ENCODE measurements at regions of chr16 and their contacts with region 1.

Region 1: GRCh38 chr16:67660564-67661028 is at the start of gene PARD6A:
- DNase-seq: peak; percentile 94
- H3K4me3 Mint-ChIP-seq: peak within 1 kb of the TSS; percentile 86
- H3K27ac Mint-ChIP-seq: peak within 1 kb of the TSS; percentile 97
- H3K4me1 Mint-ChIP-seq: peaks cover 6% of the 10 kb centered on the region
- H3K27me3 Mint-ChIP-seq: no peaks in the 10 kb centered on the region
- CTCF ChIP-seq: no peak
- total RNA-seq, gene PARD6A: 3.2 and 4.5 TPM in 2 replicates

Region 2: DNA sequence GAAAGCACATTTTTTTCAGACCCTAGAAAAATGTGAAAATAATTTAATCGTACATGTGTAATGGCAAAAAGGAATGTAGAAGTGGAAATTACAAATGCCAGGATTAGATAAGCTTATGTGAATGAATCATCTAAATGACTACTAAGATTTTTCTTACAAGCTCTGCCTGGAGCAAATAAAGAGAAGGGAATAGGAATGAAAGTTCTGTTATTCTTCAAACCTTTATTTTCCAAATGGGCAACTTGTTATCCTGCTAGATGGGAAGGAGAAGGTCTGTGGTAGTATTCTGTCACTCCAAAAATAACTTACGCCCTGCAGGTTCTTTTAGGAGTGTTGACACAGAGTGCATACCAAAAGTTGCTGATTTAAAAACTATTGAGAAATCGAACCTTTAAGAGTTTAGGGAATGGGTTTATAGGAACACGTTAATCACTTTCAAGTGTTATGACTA is 88.6 kb before region 1 on chr16:
- CTCF ChIA-PET with region 1: no interaction called
- POLR2A ChIA-PET with region 1: interaction called, 11 read pairs
- intact Hi-C with region 1: no loop called
- DNase-seq: peak; percentile 12
- H3K4me3 Mint-ChIP-seq: no peak overlapping the region
- H3K27ac Mint-ChIP-seq: peak overlapping the region; percentile 80
- H3K4me1 Mint-ChIP-seq: peaks cover 8% of the 10 kb centered on the region
- H3K27me3 Mint-ChIP-seq: no peaks in the 10 kb centered on the region
- CTCF ChIP-seq: no peak

Region 3: DNA sequence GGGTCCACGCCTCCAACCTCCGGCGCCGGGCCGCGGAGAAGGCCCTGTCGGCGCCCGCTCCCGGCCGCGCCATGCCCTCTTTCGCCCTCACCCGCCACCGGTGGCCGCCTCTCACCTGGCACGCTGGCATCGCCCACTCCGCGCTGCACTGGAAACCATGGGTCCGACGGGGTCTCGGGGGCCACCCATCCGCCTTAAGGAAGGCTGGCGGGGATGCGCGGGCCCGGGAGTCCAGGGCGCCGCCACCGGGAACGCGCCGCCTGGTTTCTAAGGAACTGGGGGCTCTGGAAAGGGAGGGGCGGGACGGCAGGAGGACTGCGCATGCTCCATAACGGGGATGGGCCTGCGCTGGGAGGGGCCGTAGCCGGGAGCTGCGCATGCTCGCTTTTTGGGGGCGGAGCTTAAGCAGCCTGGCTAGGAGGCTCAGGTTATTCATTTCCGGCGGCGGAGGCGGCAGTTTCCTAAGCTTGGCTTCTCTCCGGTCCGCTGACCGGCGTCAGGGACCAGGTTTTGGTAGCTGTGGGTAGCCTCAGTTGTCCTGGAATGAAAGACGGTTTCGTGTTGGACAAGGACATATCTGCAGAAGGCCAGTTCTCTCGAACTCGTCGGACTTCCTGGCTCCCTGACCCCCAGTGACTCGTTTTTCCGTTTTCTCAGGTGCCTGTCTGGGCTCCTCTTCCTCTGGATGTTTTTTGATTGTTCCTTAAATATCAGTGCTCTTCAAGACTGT is 58.6 kb after region 1 on chr16 and contains the start of gene GFOD2:
- CTCF ChIA-PET with region 1: no interaction called
- POLR2A ChIA-PET with region 1: interaction called, 10 read pairs
- intact Hi-C with region 1: no loop called
- DNase-seq: peak; percentile 95
- H3K4me3 Mint-ChIP-seq: peak within 1 kb of the TSS; percentile 81
- H3K27ac Mint-ChIP-seq: peak within 1 kb of the TSS; percentile 96
- H3K4me1 Mint-ChIP-seq: peaks cover 41% of the 10 kb centered on the region
- H3K27me3 Mint-ChIP-seq: no peaks in the 10 kb centered on the region
- CTCF ChIP-seq: no peak
- total RNA-seq, gene GFOD2: 14.8 and 19.0 TPM in 2 replicates